ENCODE measurements at regions of chr11 and their contacts with region 1.

Region 1: DNA sequence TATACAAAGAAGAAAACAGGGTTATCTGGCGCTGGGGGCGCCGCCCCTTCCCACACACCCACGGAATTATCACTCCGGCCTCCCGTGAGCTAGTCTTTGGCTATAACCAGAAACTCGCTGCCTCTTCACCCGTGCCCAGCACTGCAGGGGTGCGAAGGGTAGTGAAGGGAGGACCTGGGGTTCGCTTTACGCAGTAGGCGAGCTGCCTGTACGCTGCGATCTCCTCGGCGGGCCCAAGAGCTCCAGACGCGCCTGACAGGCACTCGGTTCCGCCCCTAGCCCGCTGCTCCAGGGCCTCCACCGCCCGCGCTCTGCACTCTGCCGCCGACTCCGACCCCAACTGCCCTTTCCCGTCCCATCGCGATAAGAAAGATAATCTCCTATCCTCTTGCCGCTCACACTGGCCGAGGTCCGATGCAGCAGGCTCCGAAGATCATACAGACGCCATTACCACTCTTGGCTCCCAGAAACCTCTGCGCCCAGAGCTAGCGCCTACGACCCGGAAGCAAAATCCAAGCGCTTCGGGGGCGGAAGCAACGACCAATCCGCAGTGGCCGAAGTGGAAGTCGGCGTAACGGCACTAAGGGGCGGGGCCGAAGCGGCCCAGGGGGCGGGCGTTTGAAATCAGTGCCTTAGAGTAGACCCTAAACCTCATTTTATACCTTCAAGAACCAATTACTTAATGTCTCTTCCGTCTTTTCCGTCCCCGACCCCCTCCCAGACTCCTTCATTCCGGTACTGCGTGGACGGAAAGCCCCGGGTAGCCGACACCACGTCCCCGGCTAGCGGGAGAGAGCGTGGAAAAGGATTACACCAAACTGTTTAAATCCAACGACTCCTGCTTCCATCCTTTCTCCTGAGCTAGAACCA is at the starts of genes CWC15 and KDM4D:
- DNase-seq: peak; percentile 97
- H3K4me3 Mint-ChIP-seq: peak within 1 kb of the TSS; percentile 99
- H3K27ac Mint-ChIP-seq: peak within 1 kb of the TSS; percentile 86
- H3K4me1 Mint-ChIP-seq: peaks cover 34% of the 10 kb centered on the region
- H3K27me3 Mint-ChIP-seq: no peaks in the 10 kb centered on the region
- total RNA-seq, gene CWC15: 65.9 to 67.1 TPM
- total RNA-seq, gene KDM4D: 1.4 to 1.6 TPM

Region 2: DNA sequence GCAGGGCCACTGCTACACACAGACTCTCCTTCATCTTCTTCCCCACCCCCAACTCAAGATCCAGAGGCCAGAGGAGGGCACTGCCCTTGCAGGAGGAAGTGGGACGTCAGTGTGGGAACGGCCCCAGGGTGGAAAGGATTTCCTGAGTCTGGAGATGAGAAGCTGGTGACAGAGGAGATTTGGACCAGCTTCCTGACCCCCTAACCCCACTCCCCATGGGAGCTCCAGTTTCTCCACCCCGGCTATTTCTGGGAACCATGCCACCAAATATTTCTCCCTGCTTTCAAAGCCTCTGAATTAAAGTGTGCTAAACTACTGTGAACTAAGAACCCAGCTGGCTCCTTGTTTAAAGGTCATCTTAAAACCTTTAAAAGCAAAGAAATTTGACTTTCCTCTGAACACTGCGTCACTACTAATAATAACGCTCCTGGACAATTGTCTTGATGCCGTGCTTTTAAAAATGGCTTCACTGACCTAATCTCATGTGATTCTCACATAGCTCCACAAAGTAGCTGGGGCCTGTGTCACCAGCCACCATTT is 46.6 kb before region 1 on chr11:
- CTCF ChIA-PET with region 1: no interaction called
- POLR2A ChIA-PET with region 1: no interaction called
- intact Hi-C with region 1: loop called (anchors 2 kb)
- DNase-seq: no peak
- H3K4me3 Mint-ChIP-seq: no peak overlapping the region
- H3K27ac Mint-ChIP-seq: no peak overlapping the region
- H3K4me1 Mint-ChIP-seq: peaks cover 27% of the 10 kb centered on the region
- H3K27me3 Mint-ChIP-seq: no peaks in the 10 kb centered on the region

Region 3: DNA sequence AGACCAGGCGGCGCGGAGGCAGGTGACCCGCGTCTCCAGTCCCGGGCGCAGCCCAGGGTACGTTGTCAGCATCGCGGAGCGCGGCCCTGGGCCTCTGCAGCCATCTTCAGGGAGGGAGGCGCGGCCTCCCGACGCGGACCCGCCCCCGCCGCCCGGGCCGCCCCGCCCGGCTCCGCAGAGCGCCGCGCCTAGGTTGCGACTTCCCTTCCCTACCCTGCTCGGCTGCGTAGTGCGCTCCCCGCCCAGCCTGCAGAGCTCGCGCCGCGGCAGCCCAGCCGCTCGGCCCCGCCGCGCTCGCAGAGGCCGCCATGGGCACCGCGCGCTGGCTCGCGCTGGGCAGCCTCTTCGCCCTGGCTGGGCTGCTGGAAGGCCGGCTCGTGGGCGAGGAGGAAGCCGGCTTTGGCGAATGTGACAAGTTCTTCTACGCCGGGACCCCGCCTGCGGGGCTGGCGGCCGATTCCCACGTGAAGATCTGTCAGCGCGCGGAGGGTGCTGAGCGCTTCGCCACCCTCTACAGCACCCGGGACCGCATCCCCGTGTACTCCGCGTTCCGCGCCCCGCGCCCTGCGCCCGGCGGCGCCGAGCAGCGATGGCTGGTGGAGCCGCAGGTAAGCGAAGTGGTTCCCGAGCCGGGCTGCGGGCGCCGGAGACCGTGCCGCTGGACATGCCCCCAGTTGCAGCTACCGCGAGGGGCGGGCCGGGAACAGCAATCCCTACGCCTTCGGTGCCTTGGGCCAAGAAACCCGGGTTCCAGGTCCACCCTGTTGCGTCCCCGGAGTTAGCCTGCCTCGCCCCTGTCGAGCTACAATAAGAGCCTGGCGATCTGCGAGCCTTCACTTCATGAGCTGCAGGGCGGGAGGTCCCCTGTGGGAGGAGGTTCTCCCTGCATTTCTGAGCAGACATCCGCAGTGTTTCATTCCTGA is 116.5 kb after region 1 on chr11 and contains the start of gene ENDOD1:
- CTCF ChIA-PET with region 1: interaction called, 4 read pairs
- POLR2A ChIA-PET with region 1: interaction called, 3 read pairs
- intact Hi-C with region 1: loop called (anchors 2 kb)
- DNase-seq: peak; percentile 90
- H3K4me3 Mint-ChIP-seq: peak within 1 kb of the TSS; percentile 87
- H3K27ac Mint-ChIP-seq: peak within 1 kb of the TSS; percentile 92
- H3K4me1 Mint-ChIP-seq: peaks cover 68% of the 10 kb centered on the region
- H3K27me3 Mint-ChIP-seq: no peaks in the 10 kb centered on the region
- total RNA-seq, gene ENDOD1: 25.9 TPM

Region 4: GRCh38 chr11:95138448-95138847 is 165.1 kb after region 1 on chr11:
- CTCF ChIA-PET with region 1: no interaction called
- POLR2A ChIA-PET with region 1: no interaction called
- intact Hi-C with region 1: loop called (anchors 5 kb)
- DNase-seq: no peak
- H3K4me3 Mint-ChIP-seq: no peak overlapping the region
- H3K27ac Mint-ChIP-seq: no peak overlapping the region
- H3K4me1 Mint-ChIP-seq: peaks cover 2% of the 10 kb centered on the region
- H3K27me3 Mint-ChIP-seq: peaks cover 5% of the 10 kb centered on the region

Measured in activated CD4-positive, alpha-beta memory T cell treated with anti-CD3 and anti-CD28 coated beads for 36 hours (primary cell).